B cell (primary cell): ENCODE measurements at regions of chr10 and their contacts with region 1.

Region 1: DNA sequence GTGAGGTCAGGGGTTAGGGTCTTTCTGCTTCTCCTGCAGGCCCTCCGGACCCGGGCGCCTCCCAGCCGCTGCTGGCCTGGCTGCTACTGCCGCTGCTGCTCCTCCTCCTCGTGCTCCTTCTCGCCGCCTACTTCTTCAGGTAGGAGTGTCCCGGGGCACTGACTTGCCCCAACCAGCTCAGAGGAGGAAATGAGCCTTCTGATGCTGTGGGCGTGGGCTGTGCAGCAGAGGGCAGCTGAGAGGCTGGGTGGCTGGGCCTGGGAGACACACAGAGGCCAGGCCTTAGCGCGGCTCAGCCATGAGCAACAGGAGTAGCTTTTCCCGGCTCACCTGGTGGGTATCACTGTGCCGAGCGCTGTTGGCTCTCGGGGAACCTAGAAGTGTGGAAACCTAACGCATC is 78.9 kb downstream of the MKI67 start:
- DNase-seq: peak; percentile 87
- ATAC-seq: peak; percentile 99
- H3K4me3 ChIP-seq: peak overlapping the region; percentile 49 to 97 (median 66)
- H3K4me3 Mint-ChIP-seq: peak overlapping the region; percentile 88
- H3K27ac ChIP-seq: peak overlapping the region; percentile 67 to 74
- H3K27ac Mint-ChIP-seq: peak overlapping the region; percentile 85
- H3K4me1 ChIP-seq: peaks cover 41 to 63% of the 10 kb centered on the region in 2 donors
- H3K4me1 Mint-ChIP-seq: peaks cover 53% of the 10 kb centered on the region
- H3K27me3 ChIP-seq: no peaks in the 10 kb centered on the region
- H3K27me3 Mint-ChIP-seq: no peaks in the 10 kb centered on the region
- CTCF ChIP-seq: no peak

Region 2: GRCh38 chr10:128025437-128025836 is 21.9 kb before region 1 on chr10:
- CTCF ChIA-PET with region 1: no interaction called
- POLR2A ChIA-PET with region 1: no interaction called
- intact Hi-C with region 1: no loop called
- DNase-seq: no peak
- ATAC-seq: no peak
- H3K4me3 ChIP-seq: no peak overlapping the region
- H3K4me3 Mint-ChIP-seq: no peak overlapping the region
- H3K27ac ChIP-seq: no peak overlapping the region
- H3K27ac Mint-ChIP-seq: no peak overlapping the region
- H3K4me1 ChIP-seq: peaks cover 12 to 15% of the 10 kb centered on the region in 2 donors
- H3K4me1 Mint-ChIP-seq: peaks cover 11% of the 10 kb centered on the region
- H3K27me3 ChIP-seq: no peaks in the 10 kb centered on the region
- H3K27me3 Mint-ChIP-seq: no peaks in the 10 kb centered on the region
- CTCF ChIP-seq: no peak

Region 3: GRCh38 chr10:128035557-128035973 is 11.8 kb before region 1 on chr10:
- CTCF ChIA-PET with region 1: interaction called, 84 read pairs
- POLR2A ChIA-PET with region 1: interaction called, 4 read pairs
- intact Hi-C with region 1: no loop called
- DNase-seq: peak; percentile 64
- ATAC-seq: peak; percentile 83
- H3K4me3 ChIP-seq: no peak overlapping the region
- H3K4me3 Mint-ChIP-seq: no peak overlapping the region
- H3K27ac ChIP-seq: no peak overlapping the region
- H3K27ac Mint-ChIP-seq: peak overlapping the region; percentile 41
- H3K4me1 ChIP-seq: no peaks in the 10 kb centered on the region
- H3K4me1 Mint-ChIP-seq: no peaks in the 10 kb centered on the region
- H3K27me3 ChIP-seq: no peaks in the 10 kb centered on the region
- H3K27me3 Mint-ChIP-seq: no peaks in the 10 kb centered on the region
- CTCF ChIP-seq: peak; percentile 80

Region 4: DNA sequence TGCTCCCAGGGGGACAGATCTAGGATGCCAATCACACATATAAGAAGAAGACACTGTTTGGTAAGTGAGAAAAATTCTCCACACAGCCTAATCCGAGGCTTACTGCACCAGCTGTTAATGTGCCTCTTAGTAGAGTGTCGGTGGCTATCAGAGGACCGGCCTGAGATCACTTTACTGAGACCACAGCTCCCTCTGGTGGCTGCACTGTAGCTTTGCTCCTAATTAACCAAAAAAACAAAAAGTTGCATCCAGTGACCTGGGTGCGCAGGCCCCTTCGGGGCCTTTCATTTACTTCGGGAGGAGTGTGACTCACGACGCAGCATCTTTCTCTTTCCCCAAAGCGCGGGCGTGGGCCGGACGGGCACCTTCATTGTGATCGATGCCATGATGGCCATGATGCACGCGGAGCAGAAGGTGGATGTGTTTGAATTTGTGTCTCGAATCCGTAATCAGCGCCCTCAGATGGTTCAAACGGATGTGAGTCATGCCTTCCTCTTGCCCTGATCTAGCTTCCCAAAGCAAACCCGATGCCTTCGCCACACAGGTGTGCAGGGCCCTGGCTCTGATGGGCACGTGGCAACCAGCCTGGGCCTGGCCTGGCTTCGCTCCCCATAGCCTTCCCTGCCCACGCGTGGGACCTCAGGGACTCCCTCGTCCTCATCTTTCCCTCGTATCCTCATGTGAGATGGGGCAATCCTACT is 22.1 kb after region 1 on chr10:
- CTCF ChIA-PET with region 1: interaction called, 524 read pairs
- POLR2A ChIA-PET with region 1: interaction called, 16 read pairs
- intact Hi-C with region 1: loop called (anchors 1 kb)
- DNase-seq: peak; percentile 88
- ATAC-seq: no peak
- H3K4me3 ChIP-seq: no peak overlapping the region
- H3K4me3 Mint-ChIP-seq: no peak overlapping the region
- H3K27ac ChIP-seq: no peak overlapping the region
- H3K27ac Mint-ChIP-seq: peak overlapping the region; percentile 34
- H3K4me1 ChIP-seq: peaks cover 19 to 33% of the 10 kb centered on the region in 2 donors
- H3K4me1 Mint-ChIP-seq: peaks cover 33% of the 10 kb centered on the region
- H3K27me3 ChIP-seq: no peaks in the 10 kb centered on the region
- H3K27me3 Mint-ChIP-seq: no peaks in the 10 kb centered on the region
- CTCF ChIP-seq: peak; percentile 91

Region 5: DNA sequence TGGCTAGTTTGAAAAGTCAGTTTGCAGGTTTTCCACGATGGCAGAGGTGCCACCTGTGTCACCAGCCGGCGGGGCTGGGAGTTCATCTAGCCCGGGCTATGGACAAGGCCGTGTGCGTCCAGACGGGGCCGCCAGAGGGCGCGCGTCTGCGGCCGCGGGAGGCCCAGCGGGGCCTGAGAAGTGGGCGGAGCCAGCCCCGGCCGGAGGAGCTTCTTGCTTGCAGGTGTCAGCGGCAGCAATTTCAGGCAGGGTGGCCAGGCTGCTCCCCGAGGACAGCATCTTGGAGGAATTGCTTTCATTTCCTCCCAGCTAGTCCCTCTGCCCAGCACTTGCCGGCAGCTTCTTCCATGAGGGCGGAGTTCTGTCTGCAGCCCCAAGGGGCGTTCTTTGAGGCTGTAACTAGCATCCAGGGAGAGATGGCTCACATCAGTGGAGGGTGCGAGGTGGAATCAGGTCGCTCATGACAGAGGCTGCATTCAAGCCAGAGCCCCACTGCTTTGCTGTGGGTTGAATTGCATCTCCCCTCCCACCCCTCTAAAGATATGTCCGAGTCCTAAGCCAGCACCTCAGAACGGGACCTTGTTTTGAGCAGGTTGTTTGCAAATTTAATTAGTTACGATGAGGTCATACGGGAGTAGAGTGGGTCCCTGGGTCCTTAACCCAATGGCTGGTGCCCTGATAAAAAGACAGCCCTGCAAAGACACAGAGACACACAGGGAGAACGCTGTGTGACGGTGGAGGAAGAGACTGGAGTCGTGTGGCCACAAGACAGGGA is 164.8 kb after region 1 on chr10:
- CTCF ChIA-PET with region 1: interaction called, 3 read pairs
- POLR2A ChIA-PET with region 1: no interaction called
- intact Hi-C with region 1: loop called (anchors 5 kb)
- DNase-seq: peak; percentile 89
- ATAC-seq: peak; percentile 87
- H3K4me3 ChIP-seq: no peak overlapping the region
- H3K4me3 Mint-ChIP-seq: peak overlapping the region; percentile 82
- H3K27ac ChIP-seq: no peak overlapping the region
- H3K27ac Mint-ChIP-seq: peak overlapping the region; percentile 78
- H3K4me1 ChIP-seq: peaks cover 8 to 12% of the 10 kb centered on the region in 2 donors
- H3K4me1 Mint-ChIP-seq: peaks cover 12% of the 10 kb centered on the region
- H3K27me3 ChIP-seq: peaks cover 0 to 13% (median 0%) of the 10 kb centered on the region in 4 experiments
- H3K27me3 Mint-ChIP-seq: peaks cover 23% of the 10 kb centered on the region
- CTCF ChIP-seq: peak; percentile 89

Region 6: DNA sequence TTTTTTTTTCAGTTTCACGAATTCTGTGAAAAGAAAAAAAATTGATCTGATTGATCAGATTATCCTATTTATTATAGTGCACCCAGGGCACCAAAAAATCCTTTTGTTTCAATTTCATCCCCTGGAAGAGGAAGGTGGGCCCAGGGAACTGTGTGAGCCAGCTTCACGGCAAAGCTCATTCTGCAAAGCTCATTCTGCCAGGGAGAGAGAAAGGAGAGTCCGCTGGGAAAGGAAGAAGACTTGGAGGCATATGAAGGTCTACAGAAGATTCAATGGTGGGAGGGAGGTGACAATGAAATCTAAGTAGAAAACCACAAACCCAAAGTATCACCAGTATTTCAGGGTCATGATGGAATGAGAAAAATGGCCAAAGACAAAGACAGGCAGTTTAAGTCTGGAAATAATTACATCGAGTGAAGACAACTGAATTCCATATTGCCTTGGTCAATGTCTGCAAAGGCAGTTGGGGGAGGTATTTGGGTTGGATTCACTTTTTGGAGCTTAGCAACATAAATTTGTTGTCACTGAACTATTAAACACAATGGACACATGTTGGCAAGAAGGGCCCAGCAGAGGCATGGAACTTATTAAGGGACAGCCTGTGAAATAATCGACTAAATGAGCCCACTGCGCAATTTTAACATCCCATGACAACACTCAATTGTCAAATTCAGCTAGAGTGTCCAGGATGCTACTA is 666.7 kb after region 1 on chr10:
- CTCF ChIA-PET with region 1: no interaction called
- POLR2A ChIA-PET with region 1: no interaction called
- intact Hi-C with region 1: no loop called
- DNase-seq: no peak
- ATAC-seq: no peak
- H3K4me3 ChIP-seq: no peak overlapping the region
- H3K4me3 Mint-ChIP-seq: no peak overlapping the region
- H3K27ac ChIP-seq: no peak overlapping the region
- H3K27ac Mint-ChIP-seq: no peak overlapping the region
- H3K4me1 ChIP-seq: no peaks in the 10 kb centered on the region
- H3K4me1 Mint-ChIP-seq: no peaks in the 10 kb centered on the region
- H3K27me3 ChIP-seq: peaks cover 0 to 5% (median 0%) of the 10 kb centered on the region in 4 experiments
- H3K27me3 Mint-ChIP-seq: peaks cover 6% of the 10 kb centered on the region
- CTCF ChIP-seq: no peak